Mammary epithelial cell (primary cell): ENCODE measurements at regions of chrX and their contacts with region 1.

Region 1: GRCh38 chrX:107025545-107025944 is 25.5 kb upstream of the MORC4 start:
- DNase-seq: peak; percentile 6
- H3K4me3 ChIP-seq: no peak overlapping the region
- H3K27ac ChIP-seq: no peak overlapping the region
- H3K4me1 ChIP-seq: no peaks in the 10 kb centered on the region
- H3K27me3 ChIP-seq: peaks cover 4% of the 10 kb centered on the region
- CTCF ChIP-seq: peak; percentile 54 to 72

Region 2: GRCh38 chrX:107205770-107206696 is 180.5 kb after region 1 on chrX and contains the starts of genes DNAAF6 and NUP62CL:
- CTCF ChIA-PET with region 1: no interaction called
- dilution Hi-C with region 1: no loop called
- in situ Hi-C with region 1: no loop called
- intact Hi-C with region 1: loop called (anchors 10 kb)
- DNase-seq: peak; percentile 69
- H3K4me3 ChIP-seq: peak within 1 kb of the TSS; percentile 45 to 72 (median 53)
- H3K27ac ChIP-seq: peak within 1 kb of the TSS; percentile 66
- H3K4me1 ChIP-seq: no peaks in the 10 kb centered on the region
- H3K27me3 ChIP-seq: no peaks in the 10 kb centered on the region
- CTCF ChIP-seq: no peak
- total RNA-seq, gene DNAAF6: not detected
- total RNA-seq, gene NUP62CL: 3.8 to 5.5 TPM

Region 3: GRCh38 chrX:107290019-107290418 is 264.5 kb after region 1 on chrX:
- CTCF ChIA-PET with region 1: no interaction called
- dilution Hi-C with region 1: no loop called
- in situ Hi-C with region 1: no loop called
- intact Hi-C with region 1: loop called (anchors 1 kb)
- DNase-seq: no peak
- H3K4me3 ChIP-seq: no peak overlapping the region
- H3K27ac ChIP-seq: no peak overlapping the region
- H3K4me1 ChIP-seq: no peaks in the 10 kb centered on the region
- H3K27me3 ChIP-seq: no peaks in the 10 kb centered on the region
- CTCF ChIP-seq: peak in 1 of 2 donors; percentile 6

Region 4: DNA sequence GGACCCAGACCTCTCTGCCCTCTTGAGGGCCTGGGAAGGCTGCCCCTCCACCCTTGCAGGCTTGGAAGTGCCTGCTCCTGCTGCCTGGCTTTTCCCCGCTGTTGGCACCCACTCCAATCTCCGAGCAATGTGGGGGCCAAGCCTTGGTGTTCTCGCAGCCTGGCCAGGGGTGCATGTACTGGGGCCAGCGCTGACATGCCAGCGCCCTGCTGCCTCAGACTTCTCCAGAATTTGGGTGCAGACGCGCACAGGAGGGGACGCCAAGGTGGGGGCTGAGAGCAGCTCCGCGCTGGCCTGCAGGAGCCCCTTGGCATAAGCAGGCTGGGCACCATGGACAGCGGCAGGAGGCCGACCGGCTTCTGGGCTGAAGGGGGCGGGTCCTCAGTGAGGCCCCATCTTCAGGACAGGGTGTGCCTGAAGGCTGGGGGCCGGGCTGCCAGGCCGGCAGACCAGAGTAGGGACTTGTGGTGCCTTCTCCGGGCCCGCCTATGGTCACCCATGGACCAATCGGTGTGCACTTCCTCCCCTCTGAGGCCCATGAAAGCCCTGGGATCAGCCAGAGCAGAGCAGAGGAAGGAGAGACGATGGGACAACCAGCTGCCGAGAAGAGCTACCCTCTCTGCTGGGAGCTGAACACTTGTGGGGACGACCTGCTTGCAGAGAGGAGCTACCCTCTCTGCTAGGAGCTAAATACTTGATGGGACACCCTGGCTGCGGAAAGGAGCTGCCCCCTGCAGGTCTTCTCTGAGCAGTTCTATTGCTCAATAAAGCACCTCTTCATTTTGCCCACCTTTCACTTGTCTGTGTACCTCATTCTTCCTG is 299.2 kb after region 1 on chrX:
- CTCF ChIA-PET with region 1: no interaction called
- dilution Hi-C with region 1: no loop called
- in situ Hi-C with region 1: no loop called
- intact Hi-C with region 1: loop called (anchors 1 kb)
- DNase-seq: peak; percentile 13
- H3K4me3 ChIP-seq: no peak overlapping the region
- H3K27ac ChIP-seq: no peak overlapping the region
- H3K4me1 ChIP-seq: no peaks in the 10 kb centered on the region
- H3K27me3 ChIP-seq: no peaks in the 10 kb centered on the region
- CTCF ChIP-seq: peak; percentile 15 to 45

Region 5: GRCh38 chrX:107429090-107429489 is 403.5 kb after region 1 on chrX:
- CTCF ChIA-PET with region 1: no interaction called
- dilution Hi-C with region 1: no loop called
- in situ Hi-C with region 1: no loop called
- intact Hi-C with region 1: loop called (anchors 1 kb)
- DNase-seq: no peak
- H3K4me3 ChIP-seq: no peak overlapping the region
- H3K27ac ChIP-seq: no peak overlapping the region
- H3K4me1 ChIP-seq: no peaks in the 10 kb centered on the region
- H3K27me3 ChIP-seq: no peaks in the 10 kb centered on the region
- CTCF ChIP-seq: peak; percentile 40 to 58

Region 6: DNA sequence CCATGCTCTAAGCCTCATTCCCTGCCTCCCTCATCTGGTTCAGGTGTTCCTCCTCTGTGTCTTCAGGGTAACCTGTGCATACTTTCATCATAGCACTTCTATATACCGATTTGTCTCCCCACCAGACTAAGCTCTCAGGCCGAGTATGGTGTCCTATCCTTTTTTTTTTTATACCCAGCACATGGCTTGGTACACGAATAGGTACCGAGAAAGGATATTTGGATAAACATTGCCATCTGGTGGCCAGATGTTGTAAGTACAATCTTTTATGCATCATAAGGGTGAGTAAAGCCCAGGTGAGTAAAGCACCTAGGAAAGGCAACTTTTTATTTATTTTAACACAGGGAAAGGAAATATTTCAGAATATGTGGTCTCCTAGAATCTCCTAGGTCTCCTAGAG is 868.5 kb after region 1 on chrX:
- CTCF ChIA-PET with region 1: no interaction called
- dilution Hi-C with region 1: no loop called
- in situ Hi-C with region 1: no loop called
- intact Hi-C with region 1: loop called (anchors 10 kb)
- DNase-seq: peak; percentile 57
- H3K4me3 ChIP-seq: no peak overlapping the region
- H3K27ac ChIP-seq: no peak overlapping the region
- H3K4me1 ChIP-seq: no peaks in the 10 kb centered on the region
- H3K27me3 ChIP-seq: no peaks in the 10 kb centered on the region
- CTCF ChIP-seq: peak; percentile 46 to 53